HEK293 (cell line): ENCODE measurements at regions of chr15 and their contacts with region 1.

Region 1: GRCh38 chr15:76038512-76038911 is 21.3 kb upstream of the TMEM266 start:
- H3K4me3 ChIP-seq: no peak overlapping the region
- H3K27ac ChIP-seq: no peak overlapping the region
- H3K4me1 ChIP-seq: no peaks in the 10 kb centered on the region
- CTCF ChIP-seq: no peak

Region 2: DNA sequence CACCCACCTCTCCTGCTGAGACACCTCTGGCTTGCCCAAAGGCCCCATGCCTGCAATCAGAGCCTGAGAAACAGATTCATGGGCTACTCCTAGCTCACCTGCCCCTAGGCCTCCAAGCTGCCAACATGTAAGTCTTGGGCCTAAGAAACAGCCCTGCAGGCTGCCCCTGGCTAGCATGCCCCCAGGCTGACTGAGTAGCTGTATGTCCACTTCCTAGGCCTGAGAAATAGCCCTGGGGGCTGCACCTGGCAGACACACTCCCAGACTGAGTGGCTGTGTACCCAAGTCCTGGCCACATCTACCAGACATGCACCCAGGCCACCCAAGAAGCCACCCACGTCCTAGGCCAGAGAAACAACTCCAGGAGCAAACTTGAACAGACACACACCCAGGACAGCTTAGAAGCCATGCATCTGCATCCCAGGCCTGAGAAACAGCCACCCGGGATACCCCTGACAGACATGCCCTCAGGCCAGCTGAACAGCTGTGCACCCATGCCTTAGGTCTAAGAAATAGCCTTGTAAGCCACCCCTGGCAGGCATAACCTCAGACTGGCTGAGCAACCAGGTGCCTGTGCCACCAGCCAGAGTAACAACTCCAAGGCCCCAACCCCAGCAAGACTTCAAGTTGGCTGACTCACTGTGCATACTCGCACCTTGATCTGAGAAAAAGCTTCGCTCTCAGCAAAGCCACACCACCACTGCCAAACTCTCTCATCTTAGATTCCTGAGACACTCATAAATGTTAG is 14.3 kb before region 1 on chr15:
- CTCF ChIA-PET with region 1: no interaction called
- POLR2A ChIA-PET with region 1: no interaction called
- H3K4me3 ChIP-seq: no peak overlapping the region
- H3K27ac ChIP-seq: no peak overlapping the region
- H3K4me1 ChIP-seq: no peaks in the 10 kb centered on the region
- CTCF ChIP-seq: no peak

Region 3: GRCh38 chr15:76057332-76058000 is 19.0 kb after region 1 on chr15:
- CTCF ChIA-PET with region 1: interaction called, 11 read pairs
- POLR2A ChIA-PET with region 1: no interaction called
- H3K4me3 ChIP-seq: peak overlapping the region; percentile 16
- H3K27ac ChIP-seq: no peak overlapping the region
- H3K4me1 ChIP-seq: no peaks in the 10 kb centered on the region
- CTCF ChIP-seq: no peak

Region 4: GRCh38 chr15:76285239-76285825 is 246.8 kb after region 1 on chr15:
- CTCF ChIA-PET with region 1: no interaction called
- POLR2A ChIA-PET with region 1: no interaction called
- H3K4me3 ChIP-seq: no peak overlapping the region
- H3K27ac ChIP-seq: no peak overlapping the region
- H3K4me1 ChIP-seq: no peaks in the 10 kb centered on the region
- CTCF ChIP-seq: 0 out of 2 replicates have a peak, but pooled peaks have one; percentile 12